Mammary epithelial cell (primary cell): ENCODE measurements at regions of chr7 and their contacts with region 1.

Region 1: DNA sequence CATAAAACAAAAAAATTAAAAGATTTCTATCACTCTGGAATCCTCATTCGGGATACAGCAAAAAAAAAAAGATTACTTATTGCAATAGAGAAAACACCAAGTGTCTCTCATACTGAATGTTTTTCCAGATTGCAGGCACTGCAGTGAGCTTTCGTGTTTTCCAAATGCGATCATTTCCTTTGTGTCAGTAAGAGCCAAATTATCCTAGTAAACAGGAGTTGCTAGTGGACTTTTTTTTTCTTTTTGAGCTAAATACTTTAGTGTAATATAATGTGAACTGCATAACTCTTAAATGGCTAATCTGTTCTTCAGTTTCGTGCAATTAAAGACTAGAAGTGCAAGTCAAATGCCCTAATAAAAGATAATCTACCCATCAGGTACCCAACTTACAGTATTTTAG is 44.4 kb upstream of the TOMM7 start:
- DNase-seq: no peak
- H3K4me3 ChIP-seq: no peak overlapping the region
- H3K27ac ChIP-seq: no peak overlapping the region
- H3K4me1 ChIP-seq: peaks cover 7% of the 10 kb centered on the region
- H3K27me3 ChIP-seq: no peaks in the 10 kb centered on the region
- CTCF ChIP-seq: no peak

Region 2: DNA sequence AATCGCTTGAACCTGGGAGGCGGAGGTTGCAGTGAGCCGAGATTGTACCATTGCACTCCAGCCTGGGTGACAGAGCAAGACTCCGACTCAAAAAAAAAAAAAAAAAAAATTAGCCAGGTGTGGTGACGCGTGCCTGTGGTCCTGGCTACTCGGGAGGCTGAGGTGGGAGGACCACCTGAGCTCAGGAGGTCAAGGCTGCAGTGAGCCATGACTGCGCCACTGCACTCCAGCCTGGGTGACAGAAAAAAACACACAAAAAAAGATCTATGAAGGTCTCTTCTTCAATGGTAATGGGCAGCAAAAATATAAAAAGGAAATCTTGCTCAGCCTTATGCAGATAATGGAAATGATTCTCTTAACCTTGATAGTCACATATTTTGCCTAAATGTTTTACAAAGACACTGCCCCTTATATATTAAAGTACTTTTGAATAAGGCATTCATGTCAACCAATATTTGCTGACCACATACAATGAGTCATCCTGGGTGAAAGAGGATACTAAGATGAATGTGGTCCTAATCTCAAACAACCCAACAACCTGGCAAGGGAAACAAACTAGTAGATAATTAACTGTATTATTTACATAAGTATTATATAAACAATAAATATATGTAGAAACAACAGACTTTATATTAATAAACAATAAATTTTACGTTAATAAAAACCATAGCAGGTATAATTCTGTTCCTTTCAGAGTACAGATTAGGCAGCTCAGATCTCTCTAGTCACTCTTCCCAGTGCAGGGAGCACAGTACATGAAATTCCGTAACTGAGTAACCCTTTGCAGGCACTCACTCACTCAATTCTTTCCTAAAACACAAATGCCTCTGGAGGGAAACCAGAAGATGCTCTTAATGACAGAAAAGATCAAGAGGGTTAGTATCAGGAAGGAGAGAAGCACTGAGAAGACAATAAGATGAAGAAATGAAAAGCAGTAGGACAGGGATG is 52.5 kb before region 1 on chr7:
- CTCF ChIA-PET with region 1: no interaction called
- dilution Hi-C with region 1: loop called (anchors 5 kb)
- in situ Hi-C with region 1: no loop called
- intact Hi-C with region 1: no loop called
- DNase-seq: peak; percentile 50
- H3K4me3 ChIP-seq: no peak overlapping the region
- H3K27ac ChIP-seq: no peak overlapping the region
- H3K4me1 ChIP-seq: peaks cover 11% of the 10 kb centered on the region
- H3K27me3 ChIP-seq: no peaks in the 10 kb centered on the region
- CTCF ChIP-seq: no peak